ENCODE measurements at regions of chr11 and their contacts with region 1.

Region 1: DNA sequence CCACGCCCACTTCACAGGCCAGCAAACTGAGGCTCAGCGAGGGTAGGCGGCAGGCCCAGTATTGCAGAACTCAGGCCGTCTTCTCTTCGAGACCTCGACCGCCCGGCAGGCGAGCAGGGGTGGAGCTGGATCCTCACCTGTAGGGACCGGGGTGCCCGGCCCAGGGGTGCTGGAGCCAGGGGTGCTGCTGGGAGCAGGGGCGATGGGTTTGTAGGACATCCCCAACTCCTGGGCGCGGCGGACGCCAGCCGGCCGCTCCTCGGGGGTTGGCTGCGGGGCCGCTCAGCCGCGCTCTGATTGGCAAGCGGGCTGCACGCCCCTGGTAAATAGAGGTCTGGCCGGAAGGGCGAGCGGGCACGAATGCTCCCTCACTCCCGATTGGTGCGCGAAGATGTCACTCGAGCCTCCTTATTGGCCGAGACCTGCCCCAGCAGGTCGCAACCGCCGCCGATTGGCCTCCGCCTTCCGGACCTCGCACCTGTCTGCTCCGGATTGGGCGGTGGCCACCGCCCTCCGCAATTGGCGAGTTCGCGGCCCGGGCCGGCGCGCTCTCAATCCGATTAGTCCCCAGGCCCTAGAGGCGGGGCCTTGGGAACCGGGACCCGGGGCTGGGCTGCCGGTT is at the start of gene CDK2AP2:
- DNase-seq: peak; percentile 93 to 99 (median 97)
- ATAC-seq: peak; percentile 69
- H3K4me3 ChIP-seq: peak within 1 kb of the TSS; percentile 66 to 97
- H3K4me3 Mint-ChIP-seq: peak within 1 kb of the TSS; percentile 90
- H3K27ac ChIP-seq: peak within 1 kb of the TSS; percentile 97
- H3K27ac Mint-ChIP-seq: peak within 1 kb of the TSS; percentile 97
- H3K4me1 ChIP-seq: peaks cover 42% of the 10 kb centered on the region
- H3K4me1 Mint-ChIP-seq: peaks cover 38% of the 10 kb centered on the region
- H3K27me3 ChIP-seq: no peaks in the 10 kb centered on the region
- H3K27me3 Mint-ChIP-seq: peaks cover 6% of the 10 kb centered on the region
- CTCF ChIP-seq: no peak
- total RNA-seq, gene CDK2AP2: 19.4 to 24.4 TPM

Region 2: DNA sequence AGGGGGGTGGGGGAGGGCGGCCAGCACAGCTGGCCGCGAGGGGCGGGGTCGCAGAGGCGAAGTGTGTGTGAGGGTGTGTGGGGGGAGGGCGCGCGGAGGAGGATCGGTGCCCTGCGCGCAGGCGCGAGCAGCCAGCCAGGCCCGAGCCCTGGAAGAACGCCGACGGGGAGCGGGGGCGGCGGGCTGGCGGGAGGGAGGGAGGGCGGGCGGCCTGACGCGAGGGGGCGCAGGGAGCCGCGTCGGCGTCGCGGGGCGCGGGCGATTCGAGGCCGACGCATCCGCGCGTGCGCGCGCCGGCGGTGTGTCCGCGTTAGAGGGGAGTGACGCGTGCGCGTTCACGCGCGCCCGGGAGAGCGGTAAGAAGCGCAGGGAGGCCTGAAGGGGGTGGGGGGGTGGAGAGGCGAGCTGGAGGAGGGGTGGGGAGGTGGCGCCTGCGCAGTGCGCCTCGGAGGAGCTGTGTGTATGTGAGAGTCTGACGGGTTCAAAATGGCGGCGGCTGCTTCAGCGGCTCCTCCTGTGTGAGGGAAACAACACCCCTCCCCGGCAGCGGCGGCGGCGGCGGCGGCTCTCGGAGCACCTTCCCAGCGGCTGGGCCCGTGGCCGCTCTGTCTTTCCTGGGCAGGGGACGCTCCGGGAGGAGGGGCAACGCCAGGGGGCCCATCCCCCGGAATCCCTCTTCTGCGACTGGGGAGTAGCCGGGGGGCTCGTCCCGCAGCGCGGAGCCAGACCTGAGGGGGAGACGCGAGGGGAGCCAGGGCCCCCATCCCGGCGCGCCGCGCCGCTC is 389.0 kb before region 1 on chr11 and contains the start of gene KDM2A:
- CTCF ChIA-PET with region 1: no interaction called
- POLR2A ChIA-PET with region 1: no interaction called
- intact Hi-C with region 1: loop called in 1 of 2 experiments (anchors 5 kb)
- DNase-seq: peak; percentile 98 to 100 (median 99)
- ATAC-seq: peak; percentile 81
- H3K4me3 ChIP-seq: peak within 1 kb of the TSS; percentile 62 to 80
- H3K4me3 Mint-ChIP-seq: peak within 1 kb of the TSS; percentile 97
- H3K27ac ChIP-seq: peak within 1 kb of the TSS; percentile 78 to 92
- H3K27ac Mint-ChIP-seq: peak within 1 kb of the TSS; percentile 96
- H3K4me1 ChIP-seq: peaks cover 34% of the 10 kb centered on the region
- H3K4me1 Mint-ChIP-seq: peaks cover 40% of the 10 kb centered on the region
- H3K27me3 ChIP-seq: no peaks in the 10 kb centered on the region
- H3K27me3 Mint-ChIP-seq: no peaks in the 10 kb centered on the region
- CTCF ChIP-seq: no peak
- total RNA-seq, gene KDM2A: 412 to 431 TPM

Region 3: DNA sequence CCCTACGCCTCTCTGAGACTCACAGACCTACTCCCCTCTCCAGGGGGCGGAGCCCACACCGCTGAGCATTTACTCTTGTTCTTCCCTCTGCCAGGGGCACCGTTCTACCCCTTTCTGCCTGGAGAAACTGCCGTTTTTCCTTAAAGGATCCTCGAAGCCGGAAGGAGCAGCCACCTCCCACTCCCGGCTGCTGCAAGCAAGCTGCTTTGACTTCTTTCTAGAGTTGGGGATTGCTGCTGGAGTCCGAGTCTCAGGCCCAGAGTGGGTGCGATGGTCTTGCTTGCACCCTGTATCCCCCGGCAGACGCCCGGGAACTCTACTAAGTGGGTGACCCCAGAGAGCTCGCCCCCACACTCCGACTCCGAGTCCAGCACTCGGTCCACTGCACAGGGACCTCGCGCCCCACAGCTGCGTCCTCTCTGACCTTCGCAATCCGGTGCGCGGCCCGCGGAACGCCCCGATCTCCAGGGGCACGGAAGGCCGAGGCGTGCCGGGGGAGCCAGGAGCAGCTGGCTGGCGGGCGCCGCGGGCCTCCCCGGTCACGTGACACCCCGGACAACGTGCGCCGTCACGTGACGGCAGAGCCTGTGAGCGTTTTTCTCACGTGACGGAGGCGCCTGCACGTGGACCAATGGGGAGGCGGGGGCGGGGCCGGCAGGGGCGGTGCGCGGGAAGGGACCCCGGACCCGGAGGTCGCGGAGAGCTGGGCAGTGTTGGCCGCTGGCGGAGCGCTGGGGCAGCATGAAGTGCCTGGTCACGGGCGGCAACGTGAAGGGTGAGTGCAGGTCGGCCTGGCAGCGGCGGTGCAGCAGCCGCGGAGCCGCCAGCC is 116.5 kb before region 1 on chr11 and contains the start of gene RAD9A:
- CTCF ChIA-PET with region 1: interaction called, 5 read pairs
- POLR2A ChIA-PET with region 1: interaction called, 5 read pairs
- intact Hi-C with region 1: loop called (anchors 1 kb)
- DNase-seq: peak; percentile 81 to 97 (median 93)
- ATAC-seq: peak; percentile 77
- H3K4me3 ChIP-seq: peak within 1 kb of the TSS; percentile 77 to 85
- H3K4me3 Mint-ChIP-seq: peak within 1 kb of the TSS; percentile 87
- H3K27ac ChIP-seq: peak within 1 kb of the TSS; percentile 62 to 87
- H3K27ac Mint-ChIP-seq: peak within 1 kb of the TSS; percentile 81
- H3K4me1 ChIP-seq: peaks cover 26% of the 10 kb centered on the region
- H3K4me1 Mint-ChIP-seq: peaks cover 35% of the 10 kb centered on the region
- H3K27me3 ChIP-seq: no peaks in the 10 kb centered on the region
- H3K27me3 Mint-ChIP-seq: no peaks in the 10 kb centered on the region
- CTCF ChIP-seq: no peak
- total RNA-seq, gene RAD9A: 13.7 to 14.1 TPM

Region 4: GRCh38 chr11:67428052-67428914 is 79.7 kb before region 1 on chr11 and contains the start of gene RPS6KB2:
- CTCF ChIA-PET with region 1: interaction called, 3 read pairs
- POLR2A ChIA-PET with region 1: interaction called, 3 read pairs
- intact Hi-C with region 1: loop called (anchors 1 kb)
- DNase-seq: peak; percentile 97 to 100 (median 98)
- ATAC-seq: peak; percentile 89
- H3K4me3 ChIP-seq: peak within 1 kb of the TSS; percentile 67 to 73
- H3K4me3 Mint-ChIP-seq: peak within 1 kb of the TSS; percentile 99
- H3K27ac ChIP-seq: peak within 1 kb of the TSS; percentile 86 to 87
- H3K27ac Mint-ChIP-seq: peak within 1 kb of the TSS; percentile 95
- H3K4me1 ChIP-seq: peaks cover 34% of the 10 kb centered on the region
- H3K4me1 Mint-ChIP-seq: peaks cover 41% of the 10 kb centered on the region
- H3K27me3 ChIP-seq: no peaks in the 10 kb centered on the region
- H3K27me3 Mint-ChIP-seq: no peaks in the 10 kb centered on the region
- CTCF ChIP-seq: no peak
- total RNA-seq, gene RPS6KB2: 71.8 to 76.2 TPM

Region 5: GRCh38 chr11:67482825-67483798 is 24.9 kb before region 1 on chr11 and contains the start of gene AIP:
- CTCF ChIA-PET with region 1: interaction called, 15 read pairs
- POLR2A ChIA-PET with region 1: interaction called, 5 read pairs
- intact Hi-C with region 1: loop called (anchors 1 kb)
- DNase-seq: peak; percentile 94 to 99 (median 97)
- ATAC-seq: peak; percentile 76
- H3K4me3 ChIP-seq: peak within 1 kb of the TSS; percentile 62 to 73
- H3K4me3 Mint-ChIP-seq: peak within 1 kb of the TSS; percentile 93
- H3K27ac ChIP-seq: peak within 1 kb of the TSS; percentile 81 to 89
- H3K27ac Mint-ChIP-seq: peak within 1 kb of the TSS; percentile 99
- H3K4me1 ChIP-seq: peaks cover 48% of the 10 kb centered on the region
- H3K4me1 Mint-ChIP-seq: peaks cover 54% of the 10 kb centered on the region
- H3K27me3 ChIP-seq: no peaks in the 10 kb centered on the region
- H3K27me3 Mint-ChIP-seq: no peaks in the 10 kb centered on the region
- CTCF ChIP-seq: no peak
- total RNA-seq, gene AIP: 109 to 111 TPM

Region 6: GRCh38 chr11:67522844-67523555 is 15.0 kb after region 1 on chr11 and contains the start of gene CABP2:
- CTCF ChIA-PET with region 1: no interaction called
- POLR2A ChIA-PET with region 1: no interaction called
- intact Hi-C with region 1: no loop called
- DNase-seq: no peak
- ATAC-seq: no peak
- H3K4me3 ChIP-seq: no peak within 1 kb of the TSS
- H3K4me3 Mint-ChIP-seq: no peak within 1 kb of the TSS
- H3K27ac ChIP-seq: no peak within 1 kb of the TSS
- H3K27ac Mint-ChIP-seq: no peak within 1 kb of the TSS
- H3K4me1 ChIP-seq: no peaks in the 10 kb centered on the region
- H3K4me1 Mint-ChIP-seq: no peaks in the 10 kb centered on the region
- H3K27me3 ChIP-seq: peaks cover 0 to 2% of the 10 kb centered on the region in 2 experiments
- H3K27me3 Mint-ChIP-seq: peaks cover 15% of the 10 kb centered on the region
- CTCF ChIP-seq: no peak
- total RNA-seq, gene CABP2: not detected

Region 7: DNA sequence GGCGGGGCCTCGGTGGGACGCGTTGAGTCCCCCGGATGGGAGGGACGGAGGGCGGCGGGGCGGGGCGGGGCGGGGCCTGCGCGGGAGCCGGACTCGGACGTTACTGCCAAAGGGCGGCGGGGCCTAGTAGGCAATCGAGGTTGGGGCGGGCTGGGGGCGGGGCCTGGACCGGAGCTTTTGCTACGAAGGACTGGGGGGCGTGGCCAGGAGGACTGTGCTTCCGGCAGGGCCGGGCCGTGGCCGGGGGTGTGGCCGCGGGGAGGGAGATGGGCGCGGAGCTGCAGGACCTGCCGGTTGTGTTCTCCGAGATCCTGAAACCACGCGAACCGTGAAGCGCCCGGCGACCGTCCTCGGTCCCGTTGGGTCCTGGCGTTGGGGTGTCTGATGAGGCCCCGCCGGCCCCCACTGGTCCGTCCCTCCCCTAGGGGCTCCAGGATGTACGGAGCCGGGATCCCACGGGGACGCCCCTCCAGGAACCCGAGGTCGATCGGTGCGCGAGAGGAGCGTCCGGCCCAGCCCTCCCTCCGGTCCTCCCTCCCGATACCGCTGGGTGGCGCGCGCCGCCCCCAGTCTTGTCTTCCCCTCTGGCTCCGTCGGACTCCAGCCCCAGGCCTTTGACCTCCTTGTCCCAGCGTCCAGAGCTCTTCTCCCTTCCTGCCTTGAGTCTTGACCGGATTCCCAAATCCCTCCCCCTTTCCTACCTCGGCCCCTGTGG is 122.4 kb after region 1 on chr11:
- CTCF ChIA-PET with region 1: no interaction called
- POLR2A ChIA-PET with region 1: no interaction called
- intact Hi-C with region 1: loop called in 1 of 2 experiments (anchors 1 kb)
- DNase-seq: peak in 8 of 9 experiments; percentile 88 to 97 (median 94)
- ATAC-seq: peak; percentile 36
- H3K4me3 ChIP-seq: peak overlapping the region; percentile 89 to 90
- H3K4me3 Mint-ChIP-seq: peak overlapping the region; percentile 87
- H3K27ac ChIP-seq: peak overlapping the region; percentile 71 to 90
- H3K27ac Mint-ChIP-seq: peak overlapping the region; percentile 79
- H3K4me1 ChIP-seq: peaks cover 9% of the 10 kb centered on the region
- H3K4me1 Mint-ChIP-seq: peaks cover 8% of the 10 kb centered on the region
- H3K27me3 ChIP-seq: no peaks in the 10 kb centered on the region
- H3K27me3 Mint-ChIP-seq: no peaks in the 10 kb centered on the region
- CTCF ChIP-seq: peak; percentile 86

Region 8: DNA sequence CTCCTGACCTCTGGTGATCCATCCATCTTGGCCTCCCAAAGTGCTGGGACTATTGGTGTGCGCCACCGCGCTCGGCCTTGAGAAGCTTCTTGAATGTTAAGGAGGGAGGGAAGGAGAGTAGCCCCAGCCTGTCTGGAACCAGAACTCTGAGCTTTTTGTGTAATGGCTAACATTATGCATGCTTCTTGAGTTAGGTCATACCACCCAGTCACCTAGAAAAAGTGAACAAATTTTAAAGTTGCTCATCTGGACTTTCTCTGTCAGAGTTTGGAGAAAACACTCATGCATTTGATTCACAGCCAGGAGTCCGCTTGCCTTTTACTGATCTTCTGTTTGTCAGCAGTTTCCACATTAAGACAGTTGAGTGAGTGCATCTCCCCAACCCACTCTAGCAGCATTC is 1034.6 kb after region 1 on chr11:
- CTCF ChIA-PET with region 1: no interaction called
- POLR2A ChIA-PET with region 1: no interaction called
- intact Hi-C with region 1: no loop called
- DNase-seq: no peak
- ATAC-seq: no peak
- H3K4me3 ChIP-seq: no peak overlapping the region
- H3K4me3 Mint-ChIP-seq: no peak overlapping the region
- H3K27ac ChIP-seq: no peak overlapping the region
- H3K27ac Mint-ChIP-seq: peak overlapping the region; percentile 56
- H3K4me1 ChIP-seq: peaks cover 29% of the 10 kb centered on the region
- H3K4me1 Mint-ChIP-seq: peaks cover 76% of the 10 kb centered on the region
- H3K27me3 ChIP-seq: no peaks in the 10 kb centered on the region
- H3K27me3 Mint-ChIP-seq: no peaks in the 10 kb centered on the region
- CTCF ChIP-seq: no peak